HEK293 (cell line): ENCODE measurements at regions of chr2 and their contacts with region 1.

Region 1: GRCh38 chr2:85728883-85729824 is 24.6 kb upstream of the ATOH8 start:
- H3K4me3 ChIP-seq: no peak overlapping the region
- H3K27ac ChIP-seq: no peak overlapping the region
- H3K4me1 ChIP-seq: peaks cover 2% of the 10 kb centered on the region
- CTCF ChIP-seq: peak; percentile 93

Region 2: GRCh38 chr2:85501248-85501647 is 227.9 kb before region 1 on chr2:
- CTCF ChIA-PET with region 1: no interaction called
- POLR2A ChIA-PET with region 1: no interaction called
- H3K4me3 ChIP-seq: no peak overlapping the region
- H3K27ac ChIP-seq: no peak overlapping the region
- H3K4me1 ChIP-seq: no peaks in the 10 kb centered on the region
- CTCF ChIP-seq: no peak

Region 3: DNA sequence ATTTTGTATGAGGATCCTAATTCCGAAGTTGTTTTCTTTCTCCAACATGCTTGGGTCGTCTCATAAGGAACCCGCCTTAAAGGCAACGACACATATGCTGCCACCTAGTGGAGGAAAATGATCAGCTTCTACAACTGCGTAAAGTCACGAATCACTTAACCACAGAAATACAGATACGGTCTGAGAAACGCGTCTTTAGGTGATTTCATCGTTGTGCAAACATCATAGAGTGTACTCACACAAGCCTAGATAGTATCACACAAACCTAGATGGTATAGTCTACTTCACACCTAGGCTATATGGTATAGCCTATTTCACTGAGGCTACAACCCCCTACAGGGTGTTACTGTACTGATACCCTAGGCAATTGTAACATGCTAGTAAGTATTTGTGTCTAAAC is 21.9 kb before region 1 on chr2:
- CTCF ChIA-PET with region 1: interaction called, 15 read pairs
- POLR2A ChIA-PET with region 1: no interaction called
- H3K4me3 ChIP-seq: no peak overlapping the region
- H3K27ac ChIP-seq: no peak overlapping the region
- H3K4me1 ChIP-seq: no peaks in the 10 kb centered on the region
- CTCF ChIP-seq: peak; percentile 80

Region 4: GRCh38 chr2:85741833-85742455 is 12.8 kb after region 1 on chr2:
- CTCF ChIA-PET with region 1: interaction called, 21 read pairs
- POLR2A ChIA-PET with region 1: interaction called, 6 read pairs
- H3K4me3 ChIP-seq: no peak overlapping the region
- H3K27ac ChIP-seq: peak overlapping the region; percentile 17; the same call in 1 of the 2 replicates
- H3K4me1 ChIP-seq: peaks cover 8% of the 10 kb centered on the region
- CTCF ChIP-seq: no peak

Region 5: DNA sequence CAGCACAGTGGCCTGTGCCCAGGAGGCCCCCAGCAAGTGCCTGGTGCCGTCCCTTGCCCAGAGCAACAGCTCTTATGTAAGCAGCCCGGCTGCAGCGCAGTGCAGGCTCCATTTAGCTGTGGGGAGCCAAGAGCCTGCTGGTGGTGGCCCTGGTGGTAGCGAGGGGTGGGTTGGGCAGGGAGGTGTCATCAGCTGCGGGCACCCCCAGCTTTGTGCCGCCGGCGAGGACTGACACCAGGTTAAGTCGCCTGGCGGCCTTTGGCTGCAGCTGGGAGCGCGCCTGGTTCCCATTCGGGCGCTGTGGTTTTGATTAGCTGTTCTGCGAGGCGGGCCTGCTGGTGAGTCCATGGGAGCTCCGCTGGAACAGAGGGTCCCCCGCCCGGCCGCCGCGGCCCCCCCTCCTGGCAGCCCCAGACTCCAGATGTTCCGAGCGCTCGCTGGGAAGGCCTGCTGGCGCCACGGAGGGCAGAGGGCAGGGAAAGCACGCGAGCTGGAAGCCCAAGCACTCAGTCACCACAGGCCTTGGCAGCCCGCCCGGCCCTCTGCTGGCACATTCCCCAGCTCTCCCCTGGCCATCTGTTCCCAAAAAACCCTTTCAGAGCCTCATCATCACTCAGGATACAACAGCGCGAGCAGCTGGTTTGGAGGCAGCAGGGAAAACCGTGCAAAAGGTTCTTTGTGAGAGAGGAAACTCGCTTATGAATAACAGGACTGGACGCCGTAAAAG is 43.0 kb after region 1 on chr2:
- CTCF ChIA-PET with region 1: interaction called, 30 read pairs
- POLR2A ChIA-PET with region 1: no interaction called
- H3K4me3 ChIP-seq: no peak overlapping the region
- H3K27ac ChIP-seq: peak overlapping the region; percentile 80
- H3K4me1 ChIP-seq: peaks cover 41% of the 10 kb centered on the region
- CTCF ChIP-seq: peak; percentile 91

Region 6: GRCh38 chr2:85804583-85804982 is 75.4 kb after region 1 on chr2:
- CTCF ChIA-PET with region 1: interaction called, 33 read pairs
- POLR2A ChIA-PET with region 1: no interaction called
- H3K4me3 ChIP-seq: no peak overlapping the region
- H3K27ac ChIP-seq: no peak overlapping the region
- H3K4me1 ChIP-seq: no peaks in the 10 kb centered on the region
- CTCF ChIP-seq: no peak

Region 7: GRCh38 chr2:85819811-85820510 is 90.8 kb after region 1 on chr2:
- CTCF ChIA-PET with region 1: interaction called, 141 read pairs
- POLR2A ChIA-PET with region 1: no interaction called
- H3K4me3 ChIP-seq: no peak overlapping the region
- H3K27ac ChIP-seq: no peak overlapping the region
- H3K4me1 ChIP-seq: no peaks in the 10 kb centered on the region
- CTCF ChIP-seq: no peak